HepG2 (cell line): ENCODE measurements at regions of chr9 and their contacts with region 1.

Region 1: DNA sequence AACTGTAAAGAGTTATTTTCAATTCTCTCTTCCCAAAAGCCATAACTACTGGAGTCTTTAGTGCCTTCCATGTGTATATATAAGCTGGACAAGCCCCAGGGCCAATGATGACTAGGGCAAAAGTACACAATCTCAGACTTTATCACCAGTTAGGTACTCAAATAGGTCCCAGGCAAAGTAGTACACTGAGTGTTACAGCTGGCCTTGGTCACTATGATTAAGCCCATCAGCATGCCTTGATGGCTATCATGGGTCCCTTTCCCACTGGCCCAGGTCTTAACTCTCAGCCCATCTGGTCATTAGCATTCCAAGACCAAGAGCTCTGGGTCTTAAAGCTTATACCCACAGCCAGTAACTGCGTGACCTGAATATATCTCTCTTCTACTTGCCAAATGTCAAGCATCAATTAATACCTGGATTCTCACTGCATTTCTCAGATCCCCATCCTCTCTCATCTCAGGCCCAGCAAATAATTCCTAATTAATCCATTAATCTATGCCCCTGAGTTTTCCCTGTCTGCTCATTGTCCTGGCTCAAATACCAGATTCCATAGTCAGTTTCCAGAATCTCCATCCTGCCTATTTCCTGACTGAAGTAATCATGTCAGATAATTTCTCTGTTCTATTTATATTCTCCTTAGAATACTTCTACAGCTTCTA is 62.3 kb downstream of the NR6A1 start:
- DNase-seq: peak; percentile 49
- ATAC-seq: peak; percentile 76
- H3K4me3 ChIP-seq: no peak overlapping the region
- H3K27ac ChIP-seq: no peak overlapping the region
- H3K4me1 ChIP-seq: peaks cover 22% of the 10 kb centered on the region
- H3K27me3 ChIP-seq: no peaks in the 10 kb centered on the region
- CTCF ChIP-seq: no peak
- EP300 ChIP-seq: no peak
- POLR2A ChIP-seq: no peak
- RAD21 ChIP-seq: no peak

Region 2: DNA sequence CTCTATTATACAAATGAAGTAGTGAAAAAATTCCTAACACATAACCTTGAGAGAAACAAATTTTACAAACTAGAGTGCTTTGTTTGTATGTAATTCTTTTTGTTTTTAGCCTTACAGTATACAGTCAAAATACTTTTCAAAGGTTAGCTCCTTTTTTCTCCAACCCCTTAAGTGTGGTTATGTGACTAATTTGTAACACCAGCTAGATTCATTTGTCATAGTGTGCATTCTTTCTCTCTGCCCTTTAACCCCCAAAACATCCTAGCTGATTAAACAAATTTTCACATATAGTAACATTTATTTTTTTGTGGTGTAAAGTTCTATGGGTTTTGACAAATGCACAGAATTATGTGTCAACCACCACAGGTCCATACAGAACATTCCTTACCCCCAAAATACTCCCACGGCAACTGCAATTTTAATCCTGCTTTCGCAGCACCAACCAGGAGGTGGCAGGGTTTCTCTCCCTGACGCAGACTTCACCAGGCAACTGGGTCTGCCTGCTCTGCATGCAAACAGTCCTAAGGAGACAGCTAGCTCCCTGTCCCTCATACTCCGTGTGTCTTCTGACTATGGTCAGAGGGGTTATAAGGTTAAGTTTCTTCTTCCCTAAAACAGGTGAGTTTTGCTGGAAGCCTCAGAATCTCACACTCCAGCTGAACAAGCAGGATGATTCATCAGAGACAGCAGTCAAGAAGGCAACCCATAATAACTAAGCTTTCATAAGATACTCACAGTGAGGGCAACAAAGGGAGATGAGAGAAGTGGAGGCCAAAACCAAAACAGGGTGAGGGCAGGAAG is 157.1 kb before region 1 on chr9:
- CTCF ChIA-PET with region 1: interaction called, 32 read pairs
- POLR2A ChIA-PET with region 1: no interaction called
- in situ Hi-C with region 1: loop called (anchors 5 kb)
- intact Hi-C with region 1: loop called (anchors 1 kb)
- DNase-seq: peak; percentile 53
- ATAC-seq: peak; percentile 94
- H3K4me3 ChIP-seq: no peak overlapping the region
- H3K27ac ChIP-seq: no peak overlapping the region
- H3K4me1 ChIP-seq: peaks cover 11% of the 10 kb centered on the region
- H3K27me3 ChIP-seq: no peaks in the 10 kb centered on the region; a peak in 1 of 5 replicates
- CTCF ChIP-seq: peak; percentile 87
- EP300 ChIP-seq: no peak
- POLR2A ChIP-seq: no peak
- RAD21 ChIP-seq: peak; percentile 88

Region 3: DNA sequence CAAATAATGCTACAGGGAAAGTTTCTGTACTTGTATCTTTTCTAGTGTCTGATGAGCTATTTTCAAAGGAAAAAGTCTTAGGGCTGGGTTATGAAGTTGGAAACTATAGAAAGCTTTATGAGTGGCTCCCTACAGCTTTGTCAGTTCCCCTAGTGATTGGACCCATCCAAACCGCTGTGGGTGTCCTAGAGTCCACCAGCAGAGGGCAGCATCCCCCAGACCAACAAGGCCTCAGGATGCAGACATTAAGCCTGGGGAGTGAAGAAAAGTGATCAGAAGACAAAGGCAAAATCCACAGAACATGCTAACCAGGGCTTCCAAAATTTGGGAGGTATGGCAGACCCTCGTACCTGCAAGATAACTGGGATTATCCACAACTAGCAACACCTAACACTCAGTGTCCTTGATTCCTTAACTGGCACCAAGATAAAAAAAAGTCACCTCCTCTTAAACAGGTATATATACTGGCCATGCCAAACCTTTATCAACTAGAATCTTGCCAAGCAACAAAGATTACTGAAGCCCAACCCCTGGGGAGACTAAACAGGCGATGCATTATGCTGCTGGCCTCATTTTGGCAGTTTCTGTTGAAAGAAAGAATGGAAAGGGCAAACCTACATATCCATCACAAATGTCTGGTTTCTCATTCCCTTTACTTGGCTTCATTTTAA is 91.2 kb before region 1 on chr9:
- CTCF ChIA-PET with region 1: interaction called, 141 read pairs
- POLR2A ChIA-PET with region 1: interaction called, 3 read pairs
- in situ Hi-C with region 1: loop called (anchors 5 kb)
- intact Hi-C with region 1: loop called (anchors 1 kb)
- DNase-seq: peak; percentile 66
- ATAC-seq: peak; percentile 94
- H3K4me3 ChIP-seq: no peak overlapping the region
- H3K27ac ChIP-seq: no peak overlapping the region
- H3K4me1 ChIP-seq: peaks cover 23% of the 10 kb centered on the region
- H3K27me3 ChIP-seq: no peaks in the 10 kb centered on the region
- CTCF ChIP-seq: peak; percentile 92
- EP300 ChIP-seq: no peak
- POLR2A ChIP-seq: no peak
- RAD21 ChIP-seq: peak; percentile 93

Region 4: GRCh38 chr9:124658165-124659017 is 50.4 kb before region 1 on chr9:
- CTCF ChIA-PET with region 1: interaction called, 4 read pairs
- POLR2A ChIA-PET with region 1: interaction called, 3 read pairs
- in situ Hi-C with region 1: no loop called
- intact Hi-C with region 1: loop called (anchors 5 kb)
- DNase-seq: peak; percentile 76
- ATAC-seq: peak; percentile 73
- H3K4me3 ChIP-seq: peak overlapping the region; percentile 55 to 73 (median 69)
- H3K27ac ChIP-seq: peak overlapping the region; percentile 94
- H3K4me1 ChIP-seq: peaks cover 63% of the 10 kb centered on the region
- H3K27me3 ChIP-seq: no peaks in the 10 kb centered on the region
- CTCF ChIP-seq: no peak
- EP300 ChIP-seq: 0 out of 4 replicates have a peak, but pooled peaks of 1 of the 2 experiments have one; percentile 3
- POLR2A ChIP-seq: peak; percentile 45 to 86; a peak in 3 of 4 replicates
- RAD21 ChIP-seq: no peak

Region 5: DNA sequence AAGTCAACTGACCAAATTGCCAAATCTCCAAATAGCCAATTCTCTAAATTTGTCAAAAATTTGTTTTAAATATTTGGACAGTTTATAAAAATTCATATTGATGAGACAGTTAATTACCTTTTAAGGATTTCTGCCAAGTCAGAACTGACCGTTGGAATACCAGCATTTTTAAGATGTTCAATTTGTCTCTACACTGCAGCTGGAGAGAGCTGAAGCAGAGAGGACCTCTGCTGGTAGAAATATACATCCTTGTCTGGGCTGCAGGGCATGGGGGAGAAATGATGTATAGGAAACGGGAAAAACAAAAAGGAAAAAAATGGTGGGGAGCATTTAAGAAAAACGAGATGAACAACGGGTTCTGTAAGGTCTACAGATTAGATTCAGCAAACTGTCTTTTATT is 45.5 kb after region 1 on chr9:
- CTCF ChIA-PET with region 1: interaction called, 36 read pairs
- POLR2A ChIA-PET with region 1: no interaction called
- in situ Hi-C with region 1: no loop called
- intact Hi-C with region 1: loop called (anchors 2 kb)
- DNase-seq: no peak
- ATAC-seq: peak; percentile 74
- H3K4me3 ChIP-seq: no peak overlapping the region
- H3K27ac ChIP-seq: no peak overlapping the region
- H3K4me1 ChIP-seq: peaks cover 76% of the 10 kb centered on the region
- H3K27me3 ChIP-seq: no peaks in the 10 kb centered on the region; a peak in 1 of 5 replicates
- CTCF ChIP-seq: peak; percentile 64
- EP300 ChIP-seq: no peak
- POLR2A ChIP-seq: no peak
- RAD21 ChIP-seq: no peak

Region 6: GRCh38 chr9:124764774-124765438 is 56.1 kb after region 1 on chr9:
- CTCF ChIA-PET with region 1: interaction called, 21 read pairs
- POLR2A ChIA-PET with region 1: no interaction called
- in situ Hi-C with region 1: no loop called
- intact Hi-C with region 1: loop called (anchors 2 kb)
- DNase-seq: peak; percentile 32
- ATAC-seq: peak; percentile 54; the same call in 2 of the 3 replicates
- H3K4me3 ChIP-seq: no peak overlapping the region
- H3K27ac ChIP-seq: no peak overlapping the region
- H3K4me1 ChIP-seq: peaks cover 63% of the 10 kb centered on the region
- H3K27me3 ChIP-seq: no peaks in the 10 kb centered on the region; a peak in 1 of 5 replicates
- CTCF ChIP-seq: peak; percentile 54
- EP300 ChIP-seq: no peak
- POLR2A ChIP-seq: no peak
- RAD21 ChIP-seq: 0 out of 2 replicates have a peak, but pooled peaks have one; percentile 17